Activated CD4-positive, alpha-beta T cell treated with anti-CD3 and anti-CD28 coated beads, Interleukin-2, amount 10 ng/mL, durations not matched to agents 7 days and 5 days (primary cell): ENCODE measurements at regions of chr3 and their contacts with region 1.

Region 1: GRCh38 chr3:12994607-12995388 is 78.4 kb downstream of the IQSEC1 start:
- DNase-seq: peak; percentile 79
- H3K4me3 Mint-ChIP-seq: peak overlapping the region; percentile 80
- H3K27ac Mint-ChIP-seq: no peak overlapping the region
- H3K4me1 Mint-ChIP-seq: peaks cover 20% of the 10 kb centered on the region
- H3K27me3 Mint-ChIP-seq: no peaks in the 10 kb centered on the region

Region 2: GRCh38 chr3:12966847-12967605 is 27.8 kb before region 1 on chr3:
- CTCF ChIA-PET with region 1: interaction called, 13 read pairs
- POLR2A ChIA-PET with region 1: no interaction called
- DNase-seq: no peak
- H3K4me3 Mint-ChIP-seq: peak overlapping the region; percentile 49
- H3K27ac Mint-ChIP-seq: peak overlapping the region; percentile 14
- H3K4me1 Mint-ChIP-seq: peaks cover 60% of the 10 kb centered on the region
- H3K27me3 Mint-ChIP-seq: no peaks in the 10 kb centered on the region

Region 3: GRCh38 chr3:12973827-12974226 is 21.0 kb before region 1 on chr3:
- CTCF ChIA-PET with region 1: interaction called, 10 read pairs
- POLR2A ChIA-PET with region 1: no interaction called
- DNase-seq: no peak
- H3K4me3 Mint-ChIP-seq: no peak overlapping the region
- H3K27ac Mint-ChIP-seq: no peak overlapping the region
- H3K4me1 Mint-ChIP-seq: peaks cover 12% of the 10 kb centered on the region
- H3K27me3 Mint-ChIP-seq: no peaks in the 10 kb centered on the region

Region 4: DNA sequence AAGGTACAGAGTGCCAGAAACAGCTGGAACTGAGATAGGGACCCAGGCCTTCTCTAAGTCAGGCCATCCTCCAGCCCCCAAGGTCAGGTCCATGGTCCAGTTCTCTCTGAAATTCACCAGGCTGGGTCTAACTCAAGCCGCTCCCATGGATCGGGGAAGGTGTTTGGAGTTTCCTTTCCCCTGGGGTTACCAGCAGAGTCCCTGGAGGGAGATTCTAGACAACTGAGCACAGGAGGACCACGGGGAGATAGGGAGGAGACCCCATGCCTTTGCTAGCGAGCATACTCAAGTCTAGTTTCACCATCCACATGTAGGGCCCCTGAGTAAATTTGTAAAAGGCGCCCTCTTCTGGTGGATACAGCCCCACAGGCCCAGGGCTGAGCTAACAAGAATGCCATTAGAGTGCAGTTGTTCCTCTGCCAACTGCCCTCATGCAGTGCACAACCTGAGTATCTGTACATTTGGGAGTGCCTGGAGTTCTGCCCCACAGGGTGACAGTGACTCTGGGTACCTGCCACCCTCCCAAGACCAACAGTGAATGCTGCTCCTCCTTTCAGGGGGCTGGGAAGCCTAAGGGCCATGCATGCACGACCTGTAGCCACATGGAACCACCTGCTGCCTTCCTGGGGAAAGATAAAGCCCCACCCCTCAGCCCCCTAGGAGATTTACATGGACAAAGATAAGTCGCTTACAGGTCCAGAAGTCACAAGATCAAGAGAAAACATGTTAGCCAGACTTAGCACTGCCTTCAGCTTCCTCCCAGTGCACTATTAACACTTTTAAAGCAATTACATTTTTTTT is 10.6 kb before region 1 on chr3:
- CTCF ChIA-PET with region 1: interaction called, 28 read pairs
- POLR2A ChIA-PET with region 1: no interaction called
- DNase-seq: peak; percentile 67
- H3K4me3 Mint-ChIP-seq: no peak overlapping the region
- H3K27ac Mint-ChIP-seq: no peak overlapping the region
- H3K4me1 Mint-ChIP-seq: peaks cover 33% of the 10 kb centered on the region
- H3K27me3 Mint-ChIP-seq: no peaks in the 10 kb centered on the region

Region 5: GRCh38 chr3:13012228-13012691 is 17.5 kb after region 1 on chr3:
- CTCF ChIA-PET with region 1: interaction called, 45 read pairs
- POLR2A ChIA-PET with region 1: no interaction called
- DNase-seq: peak; percentile 40
- H3K4me3 Mint-ChIP-seq: peak overlapping the region; percentile 59
- H3K27ac Mint-ChIP-seq: peak overlapping the region; percentile 99
- H3K4me1 Mint-ChIP-seq: peaks cover 84% of the 10 kb centered on the region
- H3K27me3 Mint-ChIP-seq: no peaks in the 10 kb centered on the region